ENCODE measurements at regions of chr2 and their contacts with region 1.

Region 1: GRCh38 chr2:209977386-209978239 is 24.8 kb upstream of the RPE start:
- DNase-seq: peak; percentile 47
- CTCF ChIP-seq: no peak

Region 2: GRCh38 chr2:210189452-210190143 is 212.0 kb after region 1 on chr2:
- in situ Hi-C with region 1: loop called (anchors 5 kb)
- DNase-seq: no peak
- CTCF ChIP-seq: no peak

Measured in GM13976 (cell line).